Endothelial cell of umbilical vein (primary cell): ENCODE measurements at regions of chr17 and their contacts with region 1.

Region 1: GRCh38 chr17:28252436-28252835 is 66.6 kb upstream of the TMEM97 start:
- DNase-seq: no peak
- H3K4me3 ChIP-seq: no peak overlapping the region
- H3K27ac ChIP-seq: no peak overlapping the region
- H3K4me1 ChIP-seq: peaks cover 3% of the 10 kb centered on the region
- H3K27me3 ChIP-seq: no peaks in the 10 kb centered on the region
- CTCF ChIP-seq: no peak
- POLR2A ChIP-seq: no peak

Region 2: GRCh38 chr17:27760069-27760885 is 492.2 kb before region 1 on chr17:
- CTCF ChIA-PET with region 1: interaction called, 17 read pairs
- POLR2A ChIA-PET with region 1: no interaction called
- dilution Hi-C with region 1: no loop called
- intact Hi-C with region 1: loop called (anchors 1 kb)
- DNase-seq: peak; percentile 38
- H3K4me3 ChIP-seq: no peak overlapping the region
- H3K27ac ChIP-seq: no peak overlapping the region
- H3K4me1 ChIP-seq: no peaks in the 10 kb centered on the region
- H3K27me3 ChIP-seq: no peaks in the 10 kb centered on the region
- CTCF ChIP-seq: peak; percentile 75 to 84
- POLR2A ChIP-seq: no peak

Region 3: DNA sequence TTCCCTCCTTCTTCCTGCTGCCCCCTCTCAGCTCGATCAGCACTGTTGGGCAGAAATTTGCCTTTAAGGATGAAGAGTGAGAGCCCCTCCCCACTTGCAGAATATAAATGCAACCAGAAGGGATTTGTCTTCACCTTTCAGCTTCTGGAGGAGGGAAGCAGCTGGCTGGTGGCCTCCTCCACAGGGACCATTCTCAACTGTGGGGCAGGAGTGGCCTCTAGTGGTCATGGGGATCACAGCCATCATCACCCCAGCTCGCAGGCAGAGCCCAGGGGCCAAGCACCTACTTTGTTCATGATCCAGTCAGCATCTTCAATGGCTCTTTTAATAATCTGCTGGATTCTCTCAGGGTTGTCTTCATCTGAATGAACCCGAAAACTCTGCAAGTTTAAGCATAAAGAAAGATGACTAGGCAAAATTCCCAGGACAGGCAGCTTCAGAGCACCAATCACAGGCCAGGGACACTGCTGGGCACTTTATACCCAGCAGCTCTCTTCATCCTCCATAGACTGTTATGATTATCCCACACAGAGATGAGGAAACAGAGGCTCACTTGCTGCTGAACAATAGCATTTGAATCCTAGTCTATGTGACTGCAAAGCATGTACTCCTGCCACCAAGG is 372.3 kb before region 1 on chr17:
- CTCF ChIA-PET with region 1: interaction called, 33 read pairs
- POLR2A ChIA-PET with region 1: no interaction called
- dilution Hi-C with region 1: no loop called
- intact Hi-C with region 1: loop called (anchors 2 kb)
- DNase-seq: peak; percentile 60
- H3K4me3 ChIP-seq: no peak overlapping the region
- H3K27ac ChIP-seq: no peak overlapping the region
- H3K4me1 ChIP-seq: no peaks in the 10 kb centered on the region
- H3K27me3 ChIP-seq: no peaks in the 10 kb centered on the region
- CTCF ChIP-seq: peak; percentile 91 to 93
- POLR2A ChIP-seq: no peak

Region 4: DNA sequence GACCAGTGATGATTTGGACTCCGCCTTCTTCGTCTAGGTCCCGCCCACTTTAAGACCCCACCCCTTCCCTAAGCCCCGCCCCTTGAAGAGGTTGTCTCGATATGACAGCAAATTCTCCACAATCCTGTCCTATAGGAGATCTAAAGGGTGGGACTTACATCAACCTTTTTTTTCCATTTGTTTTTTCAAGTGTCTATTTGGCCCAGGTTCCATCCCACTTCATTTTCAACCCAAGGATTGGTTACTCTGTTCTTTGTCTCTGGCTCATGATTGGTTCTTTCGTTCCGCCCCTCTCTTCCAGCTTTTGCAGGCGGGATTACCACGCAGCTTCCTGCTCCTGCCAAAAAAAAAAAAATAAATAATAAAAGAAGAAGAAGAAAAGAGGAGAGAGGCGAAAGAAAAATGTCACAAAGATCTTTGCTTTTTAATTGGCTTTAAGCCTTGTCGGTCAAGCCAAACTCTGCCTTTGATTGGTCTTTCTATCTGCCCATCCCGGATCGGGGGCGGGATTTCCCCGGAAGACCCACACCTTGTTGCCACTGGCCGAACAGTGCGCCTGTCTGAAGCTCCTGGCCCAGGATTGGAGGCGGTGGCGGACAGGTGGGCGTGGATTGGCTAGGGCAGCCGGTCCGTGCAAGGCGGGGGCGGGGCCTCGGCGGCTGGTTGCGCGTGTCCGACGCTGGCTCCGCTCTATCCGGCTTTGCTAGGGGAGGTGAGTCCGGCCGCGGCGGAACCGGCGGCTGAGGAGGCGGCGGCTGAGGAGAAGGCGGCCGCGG is 211.2 kb before region 1 on chr17:
- CTCF ChIA-PET with region 1: no interaction called
- POLR2A ChIA-PET with region 1: no interaction called
- dilution Hi-C with region 1: no loop called
- intact Hi-C with region 1: loop called (anchors 1 kb)
- DNase-seq: peak; percentile 100
- H3K4me3 ChIP-seq: peak overlapping the region in 1 of 3 experiments; percentile 95
- H3K27ac ChIP-seq: no peak overlapping the region
- H3K4me1 ChIP-seq: peaks cover 31% of the 10 kb centered on the region
- H3K27me3 ChIP-seq: no peaks in the 10 kb centered on the region
- CTCF ChIP-seq: no peak
- POLR2A ChIP-seq: peak; percentile 87

Region 5: GRCh38 chr17:28272166-28272565 is 19.7 kb after region 1 on chr17:
- CTCF ChIA-PET with region 1: interaction called, 12 read pairs
- POLR2A ChIA-PET with region 1: no interaction called
- dilution Hi-C with region 1: no loop called
- intact Hi-C with region 1: no loop called
- DNase-seq: no peak
- H3K4me3 ChIP-seq: no peak overlapping the region
- H3K27ac ChIP-seq: no peak overlapping the region
- H3K4me1 ChIP-seq: no peaks in the 10 kb centered on the region
- H3K27me3 ChIP-seq: peaks cover 0 to 6% of the 10 kb centered on the region in 2 experiments
- CTCF ChIP-seq: no peak
- POLR2A ChIP-seq: no peak